Caco-2 (cell line): ENCODE measurements at regions of chr7 and their contacts with region 1.

Region 1: DNA sequence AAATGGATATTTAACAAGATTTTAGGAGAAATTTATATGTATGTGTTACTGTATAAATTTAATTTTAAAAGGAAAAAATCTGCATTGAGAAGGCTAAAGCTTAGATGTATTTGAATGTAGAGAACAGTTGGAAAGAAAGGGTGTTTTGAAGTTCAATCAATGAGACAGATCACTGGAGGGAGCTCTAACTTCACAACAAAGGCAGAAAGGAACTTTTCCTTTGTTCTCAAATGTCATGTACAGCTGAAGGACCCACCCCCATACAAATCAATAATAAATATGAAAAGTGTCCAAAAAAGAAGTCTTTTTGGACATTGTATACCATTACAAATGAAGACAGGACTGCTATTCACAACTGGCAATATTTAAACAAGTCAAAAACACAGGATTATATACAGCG is 403.4 kb downstream of the DNAJB9 start:
- DNase-seq: peak in 1 of 2 experiments; percentile 43
- H3K4me3 ChIP-seq: no peak overlapping the region
- H3K4me3 Mint-ChIP-seq: no peak overlapping the region
- H3K27ac Mint-ChIP-seq: no peak overlapping the region
- H3K4me1 ChIP-seq: 0 out of 2 replicates have a peak, but pooled peaks cover 4% of the 10 kb centered on the region
- H3K4me1 Mint-ChIP-seq: peaks cover 12% of the 10 kb centered on the region
- H3K27me3 ChIP-seq: no peaks in the 10 kb centered on the region; the same call in 1 of the 2 replicates
- H3K27me3 Mint-ChIP-seq: no peaks in the 10 kb centered on the region
- CTCF ChIP-seq: peak; percentile 29 to 48

Region 2: DNA sequence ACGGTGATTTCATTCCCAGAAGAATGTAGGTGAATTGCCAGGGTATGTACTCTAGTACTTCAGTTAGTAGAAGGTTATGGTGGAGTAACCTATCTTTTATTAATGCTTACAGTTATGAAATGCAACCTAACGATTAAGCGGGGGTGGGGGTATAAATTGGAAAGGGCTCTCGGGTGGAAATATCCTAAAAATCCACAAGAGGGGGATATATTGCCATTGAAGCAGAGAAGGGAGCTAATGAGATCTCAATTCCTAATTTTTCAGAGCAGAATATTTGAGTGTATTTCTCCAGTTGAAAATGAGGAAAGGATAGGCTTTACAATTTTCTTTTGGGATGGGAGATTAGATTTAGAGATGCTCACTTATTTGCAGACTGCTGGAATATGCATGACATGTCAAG is 312.6 kb before region 1 on chr7:
- CTCF ChIA-PET with region 1: no interaction called
- POLR2A ChIA-PET with region 1: no interaction called
- intact Hi-C with region 1: loop called (anchors 1 kb)
- DNase-seq: peak in 1 of 2 experiments; percentile 17
- H3K4me3 ChIP-seq: no peak overlapping the region
- H3K4me3 Mint-ChIP-seq: no peak overlapping the region
- H3K27ac Mint-ChIP-seq: no peak overlapping the region
- H3K4me1 ChIP-seq: no peaks in the 10 kb centered on the region
- H3K4me1 Mint-ChIP-seq: no peaks in the 10 kb centered on the region
- H3K27me3 ChIP-seq: no peaks in the 10 kb centered on the region
- H3K27me3 Mint-ChIP-seq: no peaks in the 10 kb centered on the region
- CTCF ChIP-seq: peak; percentile 27 to 58

Region 3: DNA sequence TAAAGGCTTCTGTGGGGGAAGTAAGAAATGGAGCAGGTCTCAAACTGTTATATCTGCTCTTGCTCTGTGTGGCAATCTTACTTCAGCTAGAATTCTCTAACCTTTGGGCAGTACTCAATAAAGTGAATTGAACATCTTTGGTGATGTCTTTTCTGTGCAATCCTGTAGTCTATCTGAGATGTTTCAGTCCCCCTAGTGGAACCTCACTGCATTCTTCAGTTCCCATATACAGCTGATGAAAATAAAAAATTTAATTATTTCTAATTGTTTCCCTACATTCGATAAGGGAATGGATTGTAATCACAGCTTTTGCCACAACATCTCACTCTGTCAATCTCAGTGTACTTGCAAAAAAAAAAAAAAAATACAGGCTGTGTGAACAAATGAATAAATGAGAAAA is 119.2 kb after region 1 on chr7:
- CTCF ChIA-PET with region 1: interaction called, 3 read pairs
- POLR2A ChIA-PET with region 1: no interaction called
- intact Hi-C with region 1: loop called (anchors 2 kb)
- DNase-seq: no peak
- H3K4me3 ChIP-seq: no peak overlapping the region
- H3K4me3 Mint-ChIP-seq: no peak overlapping the region
- H3K27ac Mint-ChIP-seq: no peak overlapping the region
- H3K4me1 ChIP-seq: no peaks in the 10 kb centered on the region
- H3K4me1 Mint-ChIP-seq: no peaks in the 10 kb centered on the region
- H3K27me3 ChIP-seq: no peaks in the 10 kb centered on the region
- H3K27me3 Mint-ChIP-seq: no peaks in the 10 kb centered on the region
- CTCF ChIP-seq: peak in 1 of 2 experiments; percentile 9

Region 4: DNA sequence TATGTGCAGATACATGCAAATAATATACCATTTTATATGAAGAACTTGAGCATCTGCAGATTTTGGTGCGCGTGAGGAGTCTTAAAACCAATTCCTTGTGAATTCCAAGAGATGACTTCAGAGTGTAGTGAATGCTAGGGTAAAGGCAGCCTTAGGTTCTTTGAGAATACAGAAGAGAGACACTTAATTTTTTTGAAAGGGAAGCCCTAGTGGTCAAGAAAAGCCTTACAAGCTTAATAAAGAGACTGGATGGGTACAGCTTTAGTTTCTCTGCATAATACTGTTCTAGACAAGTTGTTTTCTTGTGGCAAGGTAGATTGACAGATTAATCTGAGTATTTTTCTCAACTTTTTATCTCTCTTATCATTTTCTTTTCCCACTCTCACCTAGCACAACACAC is 233.1 kb after region 1 on chr7:
- CTCF ChIA-PET with region 1: no interaction called
- POLR2A ChIA-PET with region 1: no interaction called
- intact Hi-C with region 1: loop called (anchors 10 kb)
- DNase-seq: no peak
- H3K4me3 ChIP-seq: no peak overlapping the region
- H3K4me3 Mint-ChIP-seq: no peak overlapping the region
- H3K27ac Mint-ChIP-seq: no peak overlapping the region
- H3K4me1 ChIP-seq: no peaks in the 10 kb centered on the region
- H3K4me1 Mint-ChIP-seq: no peaks in the 10 kb centered on the region
- H3K27me3 ChIP-seq: no peaks in the 10 kb centered on the region
- H3K27me3 Mint-ChIP-seq: no peaks in the 10 kb centered on the region
- CTCF ChIP-seq: no peak

Region 5: DNA sequence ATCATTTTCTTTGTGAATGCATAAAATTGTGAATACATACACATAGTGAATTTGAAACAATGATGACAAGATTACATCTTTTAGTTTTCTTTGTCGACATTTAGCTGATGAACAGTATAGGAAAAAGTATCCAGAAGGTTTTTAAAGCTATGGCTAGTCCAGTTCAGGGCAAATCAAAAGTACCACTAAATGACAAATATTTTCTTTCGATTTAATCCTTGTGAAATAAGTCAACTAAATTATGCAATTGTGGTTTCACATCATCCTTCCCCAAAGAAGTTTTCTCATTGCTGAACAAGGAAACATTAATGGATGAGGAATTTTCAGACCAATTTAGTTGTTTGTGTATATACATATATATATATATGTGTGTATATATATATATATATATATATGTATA is 370.6 kb after region 1 on chr7:
- CTCF ChIA-PET with region 1: no interaction called
- POLR2A ChIA-PET with region 1: no interaction called
- intact Hi-C with region 1: loop called (anchors 1 kb)
- DNase-seq: no peak
- H3K4me3 ChIP-seq: no peak overlapping the region
- H3K4me3 Mint-ChIP-seq: no peak overlapping the region
- H3K27ac Mint-ChIP-seq: no peak overlapping the region
- H3K4me1 ChIP-seq: no peaks in the 10 kb centered on the region
- H3K4me1 Mint-ChIP-seq: no peaks in the 10 kb centered on the region
- H3K27me3 ChIP-seq: no peaks in the 10 kb centered on the region
- H3K27me3 Mint-ChIP-seq: no peaks in the 10 kb centered on the region
- CTCF ChIP-seq: no peak